Caco-2 (cell line): ENCODE measurements at regions of chr20 and their contacts with region 1.

Region 1: GRCh38 chr20:63749597-63750508 is 10.3 kb downstream of the SLC2A4RG start:
- DNase-seq: no peak
- H3K4me3 ChIP-seq: no peak overlapping the region
- H3K4me3 Mint-ChIP-seq: no peak overlapping the region
- H3K27ac Mint-ChIP-seq: no peak overlapping the region
- H3K4me1 ChIP-seq: no peaks in the 10 kb centered on the region
- H3K4me1 Mint-ChIP-seq: no peaks in the 10 kb centered on the region
- H3K27me3 ChIP-seq: no peaks in the 10 kb centered on the region
- H3K27me3 Mint-ChIP-seq: no peaks in the 10 kb centered on the region
- CTCF ChIP-seq: no peak

Region 2: DNA sequence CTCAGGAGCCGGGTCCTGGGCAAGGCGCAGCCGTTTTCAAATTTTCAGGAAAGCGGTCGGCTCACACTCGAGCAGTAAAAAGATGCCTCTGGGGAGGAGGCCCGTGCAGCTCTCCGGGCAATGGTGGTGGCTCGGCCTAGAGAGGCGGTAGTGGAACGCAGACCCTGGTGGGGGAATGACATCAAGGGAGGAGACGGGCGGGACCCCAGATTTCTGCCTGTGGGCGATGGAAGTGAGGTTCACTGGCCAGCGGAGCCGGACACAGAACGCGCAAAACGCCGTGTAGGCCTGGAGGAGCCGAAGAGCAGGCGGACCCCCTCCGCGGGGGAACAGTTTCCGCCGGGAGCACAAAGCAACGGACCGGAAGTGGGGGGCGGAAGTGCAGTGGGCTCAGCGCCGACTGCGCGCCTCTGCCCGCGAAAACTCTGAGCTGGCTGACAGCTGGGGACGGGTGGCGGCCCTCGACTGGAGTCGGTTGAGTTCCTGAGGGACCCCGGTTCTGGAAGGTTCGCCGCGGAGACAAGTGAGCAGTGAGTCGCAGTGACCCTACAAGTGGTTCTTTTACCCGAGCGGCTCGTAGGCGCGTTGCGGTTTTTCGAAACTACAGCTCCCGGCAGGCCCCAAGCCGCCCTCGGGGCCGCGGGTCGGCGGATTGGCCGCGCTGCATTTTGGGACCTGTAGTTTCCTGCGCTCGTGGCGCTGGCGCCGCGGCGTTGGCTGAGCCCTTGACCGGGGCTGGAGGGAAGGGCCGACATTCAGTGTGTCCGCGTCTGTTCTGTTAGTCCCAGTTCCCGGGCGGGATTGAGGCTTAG is 91.7 kb before region 1 on chr20 and contains the start of gene RTEL1:
- CTCF ChIA-PET with region 1: interaction called, 13 read pairs
- POLR2A ChIA-PET with region 1: no interaction called
- intact Hi-C with region 1: no loop called
- DNase-seq: peak; percentile 96 to 99
- H3K4me3 ChIP-seq: peak within 1 kb of the TSS; percentile 82
- H3K4me3 Mint-ChIP-seq: peak within 1 kb of the TSS; percentile 86
- H3K27ac Mint-ChIP-seq: peak within 1 kb of the TSS; percentile 77
- H3K4me1 ChIP-seq: peaks cover 10% of the 10 kb centered on the region
- H3K4me1 Mint-ChIP-seq: peaks cover 15% of the 10 kb centered on the region
- H3K27me3 ChIP-seq: no peaks in the 10 kb centered on the region
- H3K27me3 Mint-ChIP-seq: no peaks in the 10 kb centered on the region
- CTCF ChIP-seq: no peak
- total RNA-seq, gene RTEL1: 51.1 and 61.6 TPM in 2 replicates